PC-3 (cell line): ENCODE measurements at regions of chr14 and their contacts with region 1.

Region 1: GRCh38 chr14:63371033-63371432 is 52.3 kb upstream of the GPHB5 start:
- DNase-seq: no peak
- ATAC-seq: no peak
- H3K4me3 ChIP-seq: no peak overlapping the region
- H3K27ac ChIP-seq: no peak overlapping the region
- H3K4me1 ChIP-seq: no peaks in the 10 kb centered on the region
- H3K27me3 ChIP-seq: no peaks in the 10 kb centered on the region
- CTCF ChIP-seq: no peak

Region 2: DNA sequence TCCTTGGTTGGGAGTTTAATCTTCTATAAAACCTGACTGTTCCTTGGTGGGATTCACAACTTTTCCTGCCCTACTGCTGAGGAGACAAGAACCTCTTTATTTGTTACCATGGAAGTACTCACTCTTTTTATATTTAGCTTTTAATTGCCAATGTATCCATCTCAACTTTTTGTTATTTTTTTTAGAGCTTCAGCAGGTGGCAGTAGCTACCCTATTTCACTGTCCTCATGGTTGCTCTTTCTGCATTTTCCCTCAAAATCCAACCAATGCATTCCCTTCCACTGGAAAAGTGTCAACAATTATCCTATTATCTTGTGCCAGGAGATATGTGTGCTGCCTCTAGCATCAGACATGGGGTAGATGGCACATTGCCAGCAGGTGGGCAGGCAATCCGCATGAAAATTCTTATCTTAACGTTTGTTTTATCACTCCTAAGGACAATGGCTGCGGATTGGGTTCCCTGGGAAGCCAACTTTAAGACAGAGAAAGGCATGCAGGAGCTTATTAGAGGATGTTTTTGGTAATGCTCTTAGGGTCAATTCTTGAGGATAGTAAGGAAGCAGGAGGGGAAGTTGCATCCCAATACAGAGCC is 1202.4 kb before region 1 on chr14:
- CTCF ChIA-PET with region 1: no interaction called
- POLR2A ChIA-PET with region 1: no interaction called
- intact Hi-C with region 1: loop called (anchors 5 kb)
- DNase-seq: peak; percentile 8
- ATAC-seq: peak; percentile 39; the same call in 1 of the 2 replicates
- H3K4me3 ChIP-seq: no peak overlapping the region
- H3K27ac ChIP-seq: no peak overlapping the region
- H3K4me1 ChIP-seq: no peaks in the 10 kb centered on the region
- H3K27me3 ChIP-seq: peaks cover 40% of the 10 kb centered on the region; the same call in 1 of the 2 replicates
- CTCF ChIP-seq: peak; percentile 58

Region 3: DNA sequence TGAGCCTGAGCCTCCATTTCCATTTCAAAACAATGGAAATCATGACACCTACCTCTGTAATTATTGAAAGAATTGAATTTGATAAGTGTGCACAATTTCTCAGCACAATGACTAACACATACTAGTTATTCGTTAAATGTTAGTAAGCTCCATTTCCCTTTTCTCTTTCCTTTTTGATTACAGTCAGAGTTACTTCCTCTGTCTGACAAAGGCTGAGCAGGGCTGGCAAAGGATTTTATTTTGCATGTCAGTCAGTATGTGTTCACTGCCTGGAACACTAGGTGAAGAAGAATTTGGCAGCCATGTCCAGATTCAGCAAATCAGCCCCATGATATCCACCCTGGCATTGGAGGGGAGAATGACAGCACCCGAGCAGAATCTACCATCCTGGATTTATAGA is 178.9 kb before region 1 on chr14:
- CTCF ChIA-PET with region 1: no interaction called
- POLR2A ChIA-PET with region 1: no interaction called
- intact Hi-C with region 1: no loop called
- DNase-seq: no peak
- ATAC-seq: peak; percentile 50
- H3K4me3 ChIP-seq: no peak overlapping the region
- H3K27ac ChIP-seq: no peak overlapping the region
- H3K4me1 ChIP-seq: no peaks in the 10 kb centered on the region
- H3K27me3 ChIP-seq: no peaks in the 10 kb centered on the region
- CTCF ChIP-seq: no peak